ENCODE measurements at regions of chr15 and their contacts with region 1.

Region 1: DNA sequence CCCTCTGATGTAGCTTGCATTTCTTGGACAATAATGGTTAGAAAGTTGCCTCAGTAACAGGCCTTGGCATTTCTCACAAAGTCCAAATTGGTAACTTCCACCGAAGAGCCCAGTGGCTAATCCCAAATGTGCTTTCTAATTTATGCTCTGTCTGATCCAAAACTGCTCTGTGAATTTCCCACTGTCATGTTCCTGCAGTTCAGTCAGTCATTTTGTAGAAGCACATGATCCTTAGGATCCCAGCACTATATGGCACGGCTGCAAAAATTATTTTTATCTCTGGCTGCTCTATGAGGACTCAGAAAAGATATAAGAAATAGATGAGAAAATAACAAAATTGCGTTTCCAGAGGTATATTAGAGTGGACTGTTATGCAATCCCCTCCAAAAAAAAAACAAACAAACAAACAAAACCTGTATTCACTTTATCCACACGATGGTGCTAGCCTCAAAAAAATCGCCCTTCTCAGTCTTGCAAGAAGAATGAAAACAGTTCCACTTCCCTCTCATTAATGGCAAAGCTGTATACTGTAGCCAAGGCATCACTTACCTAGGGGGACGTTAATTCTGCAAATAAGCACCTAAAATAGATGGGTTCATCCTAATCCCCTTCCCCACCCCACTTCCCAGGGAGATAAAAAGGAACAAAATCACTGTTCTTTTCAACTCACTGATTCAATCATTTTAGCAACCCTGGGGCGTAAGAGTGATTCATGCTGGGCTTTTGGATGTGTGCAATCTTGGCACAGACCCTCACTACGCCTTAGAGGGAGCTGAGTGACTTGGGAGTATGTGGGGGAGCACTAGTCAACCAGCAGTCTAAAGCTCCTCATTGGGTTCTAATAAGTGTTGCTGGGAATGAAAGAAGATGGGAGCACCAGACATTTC is 61.3 kb downstream of the TMCO5A start:
- DNase-seq: peak; percentile 58
- H3K4me3 ChIP-seq: no peak overlapping the region
- H3K27ac ChIP-seq: no peak overlapping the region
- H3K4me1 ChIP-seq: no peaks in the 10 kb centered on the region
- H3K27me3 ChIP-seq: peaks cover 19 to 49% of the 10 kb centered on the region in 2 experiments
- CTCF ChIP-seq: peak; percentile 43 to 46
- POLR2A ChIP-seq: no peak

Region 2: GRCh38 chr15:37973856-37974255 is 21.8 kb before region 1 on chr15:
- CTCF ChIA-PET with region 1: no interaction called
- POLR2A ChIA-PET with region 1: no interaction called
- dilution Hi-C with region 1: no loop called
- intact Hi-C with region 1: no loop called
- DNase-seq: no peak
- H3K4me3 ChIP-seq: no peak overlapping the region
- H3K27ac ChIP-seq: no peak overlapping the region
- H3K4me1 ChIP-seq: no peaks in the 10 kb centered on the region
- H3K27me3 ChIP-seq: peaks cover 4 to 17% of the 10 kb centered on the region in 2 experiments
- CTCF ChIP-seq: no peak
- POLR2A ChIP-seq: no peak

Region 3: GRCh38 chr15:38115121-38115520 is 119.4 kb after region 1 on chr15:
- CTCF ChIA-PET with region 1: no interaction called
- POLR2A ChIA-PET with region 1: no interaction called
- dilution Hi-C with region 1: no loop called
- intact Hi-C with region 1: no loop called
- DNase-seq: no peak
- H3K4me3 ChIP-seq: no peak overlapping the region
- H3K27ac ChIP-seq: no peak overlapping the region
- H3K4me1 ChIP-seq: no peaks in the 10 kb centered on the region
- H3K27me3 ChIP-seq: peaks cover 4 to 12% of the 10 kb centered on the region in 2 experiments
- CTCF ChIP-seq: no peak
- POLR2A ChIP-seq: no peak

Region 4: GRCh38 chr15:38252481-38253412 is 257.0 kb after region 1 on chr15 and contains the start of gene SPRED1:
- CTCF ChIA-PET with region 1: interaction called, 10 read pairs
- POLR2A ChIA-PET with region 1: interaction called, 3 read pairs
- dilution Hi-C with region 1: no loop called
- intact Hi-C with region 1: no loop called
- DNase-seq: peak; percentile 69
- H3K4me3 ChIP-seq: peak within 1 kb of the TSS; percentile 77 to 95 (median 91)
- H3K27ac ChIP-seq: peak within 1 kb of the TSS; percentile 69
- H3K4me1 ChIP-seq: peaks cover 22% of the 10 kb centered on the region
- H3K27me3 ChIP-seq: peaks cover 5 to 9% of the 10 kb centered on the region in 2 experiments
- CTCF ChIP-seq: no peak
- POLR2A ChIP-seq: no peak
- total RNA-seq, gene SPRED1: 10.7 and 16.4 TPM in 2 replicates

Region 5: DNA sequence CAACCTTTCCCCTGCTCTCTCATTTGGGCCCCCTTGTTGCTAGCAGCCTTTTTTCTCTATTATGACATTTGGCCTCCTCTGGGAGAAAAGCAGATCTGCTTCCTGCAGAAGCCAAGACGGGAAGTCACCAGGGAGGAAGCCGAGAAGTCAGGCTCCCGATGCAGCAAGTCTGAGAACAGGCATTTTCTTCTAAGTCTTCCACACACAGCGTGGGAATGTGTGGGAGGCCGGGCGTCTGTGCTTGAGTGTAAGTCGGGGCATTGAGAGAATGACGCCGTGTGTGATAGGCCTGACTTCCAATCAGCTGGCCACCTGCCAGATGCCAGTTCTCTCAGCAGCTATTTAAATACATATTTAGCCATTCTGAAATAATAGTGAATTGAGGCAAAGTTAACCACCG is 382.5 kb after region 1 on chr15:
- CTCF ChIA-PET with region 1: interaction called, 10 read pairs
- POLR2A ChIA-PET with region 1: no interaction called
- dilution Hi-C with region 1: loop called (anchors 25 kb)
- intact Hi-C with region 1: no loop called
- DNase-seq: peak; percentile 85
- H3K4me3 ChIP-seq: no peak overlapping the region
- H3K27ac ChIP-seq: no peak overlapping the region
- H3K4me1 ChIP-seq: peaks cover 19% of the 10 kb centered on the region
- H3K27me3 ChIP-seq: peaks cover 0 to 4% of the 10 kb centered on the region in 2 experiments
- CTCF ChIP-seq: no peak
- POLR2A ChIP-seq: no peak

Region 6: DNA sequence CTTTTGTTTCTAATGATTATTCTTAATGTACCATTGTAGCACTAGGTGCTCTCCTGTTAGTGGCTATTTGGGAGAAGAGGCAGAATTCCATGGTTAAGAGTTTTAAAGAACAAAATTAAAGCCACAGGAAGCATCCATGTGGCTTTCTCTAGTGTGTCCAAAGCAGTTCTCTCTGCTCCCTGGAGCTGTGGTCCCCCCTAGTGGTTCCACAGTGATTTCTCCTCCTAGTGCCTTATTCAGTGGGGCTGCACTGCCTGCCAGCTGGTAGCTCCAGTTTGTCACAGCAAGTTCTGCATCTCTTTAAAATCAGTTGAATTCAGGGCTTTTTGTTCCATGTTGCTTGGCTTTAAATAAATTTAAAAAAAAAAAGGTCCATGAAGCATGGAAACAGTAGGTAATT is 418.7 kb after region 1 on chr15:
- CTCF ChIA-PET with region 1: interaction called, 61 read pairs
- POLR2A ChIA-PET with region 1: no interaction called
- dilution Hi-C with region 1: no loop called
- intact Hi-C with region 1: loop called (anchors 2 kb)
- DNase-seq: peak; percentile 53
- H3K4me3 ChIP-seq: no peak overlapping the region
- H3K27ac ChIP-seq: no peak overlapping the region
- H3K4me1 ChIP-seq: no peaks in the 10 kb centered on the region
- H3K27me3 ChIP-seq: peaks cover 23 to 31% of the 10 kb centered on the region in 2 experiments
- CTCF ChIP-seq: peak; percentile 49 to 71
- POLR2A ChIP-seq: no peak

Region 7: DNA sequence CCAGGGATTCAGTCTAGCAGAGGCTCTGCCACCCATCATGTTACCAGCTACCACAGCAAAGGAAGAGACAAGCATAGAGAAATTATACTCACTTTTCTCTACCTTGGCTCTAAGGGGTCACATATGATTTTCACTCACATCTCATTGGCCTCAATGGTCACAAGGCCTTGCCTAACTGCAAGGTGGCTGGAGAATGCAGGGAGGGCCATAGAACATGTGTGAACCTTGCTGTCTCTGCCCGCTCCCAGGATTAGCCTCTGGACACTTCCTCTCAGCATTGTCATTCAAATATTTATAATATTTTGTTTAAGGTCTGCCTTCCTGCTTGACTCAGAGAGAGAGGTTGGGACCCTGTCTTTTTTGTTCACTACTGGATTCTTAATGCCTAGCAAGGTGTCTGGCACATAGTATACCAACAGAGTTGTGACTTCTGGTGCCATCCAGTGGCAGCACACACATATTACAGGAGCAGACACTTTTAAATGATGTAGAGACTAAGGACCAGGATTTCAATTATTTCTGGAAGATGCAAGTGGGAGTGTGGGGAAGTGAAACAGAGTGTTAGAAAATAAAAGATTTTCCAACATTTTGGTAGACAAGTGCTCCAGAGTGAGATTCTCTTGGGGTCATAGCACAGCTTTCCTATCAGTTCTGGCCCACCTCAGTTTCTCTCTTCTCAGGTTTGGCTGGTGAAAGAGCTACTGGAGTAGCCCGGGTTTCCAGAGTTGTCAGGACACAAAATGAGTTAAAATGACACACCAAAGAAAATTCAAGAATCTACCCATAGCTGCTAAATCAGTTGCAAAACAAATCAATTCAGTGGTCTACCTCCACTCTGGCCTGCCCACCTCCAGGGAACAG is 687.9 kb after region 1 on chr15:
- CTCF ChIA-PET with region 1: interaction called, 67 read pairs
- POLR2A ChIA-PET with region 1: no interaction called
- dilution Hi-C with region 1: no loop called
- intact Hi-C with region 1: loop called (anchors 1 kb)
- DNase-seq: peak; percentile 59
- H3K4me3 ChIP-seq: no peak overlapping the region
- H3K27ac ChIP-seq: no peak overlapping the region
- H3K4me1 ChIP-seq: no peaks in the 10 kb centered on the region
- H3K27me3 ChIP-seq: peaks cover 17 to 20% of the 10 kb centered on the region in 2 experiments
- CTCF ChIP-seq: peak; percentile 63 to 64
- POLR2A ChIP-seq: no peak

Region 8: DNA sequence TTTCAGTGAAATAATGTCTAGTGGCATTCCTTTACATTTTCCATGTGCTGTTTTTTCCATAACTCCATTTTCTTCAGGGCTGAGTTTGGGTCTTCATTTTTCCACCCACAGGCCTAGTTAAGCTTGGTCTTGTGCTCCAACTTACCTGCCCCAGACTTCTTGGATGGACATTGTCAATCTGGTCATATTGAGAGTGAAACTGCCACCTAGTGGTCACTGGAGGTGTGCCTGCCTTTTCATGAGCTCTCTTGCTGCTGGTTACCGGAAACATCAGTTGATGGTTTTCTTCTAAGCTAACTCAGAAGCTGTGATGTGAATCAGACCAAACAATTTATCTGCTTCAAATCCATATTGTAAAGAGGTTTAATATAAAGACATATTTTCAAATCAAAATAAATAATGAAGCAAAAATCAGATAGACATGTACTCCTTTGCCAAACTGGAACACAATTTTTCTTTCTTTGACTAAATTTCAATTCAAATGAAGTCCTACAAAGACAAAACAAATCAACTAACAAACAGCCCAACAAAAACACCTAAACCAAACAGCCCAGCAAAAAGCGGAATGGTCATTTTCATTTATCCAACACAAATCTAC is 704.0 kb after region 1 on chr15:
- CTCF ChIA-PET with region 1: interaction called, 69 read pairs
- POLR2A ChIA-PET with region 1: no interaction called
- dilution Hi-C with region 1: no loop called
- intact Hi-C with region 1: no loop called
- DNase-seq: peak; percentile 71
- H3K4me3 ChIP-seq: no peak overlapping the region
- H3K27ac ChIP-seq: no peak overlapping the region
- H3K4me1 ChIP-seq: no peaks in the 10 kb centered on the region
- H3K27me3 ChIP-seq: no peaks in the 10 kb centered on the region
- CTCF ChIP-seq: peak; percentile 79 to 94
- POLR2A ChIP-seq: no peak

Measured in endothelial cell of umbilical vein (primary cell).